ENCODE measurements at regions of chr1 and their contacts with region 1.

Region 1: GRCh38 chr1:2194898-2195673 is 514 bp upstream of the FAAP20 start:
- DNase-seq: peak; percentile 93
- ATAC-seq: peak; percentile 75
- H3K4me3 ChIP-seq: peak overlapping the region; percentile 46 to 81 (median 63)
- H3K4me3 Mint-ChIP-seq: peak overlapping the region; percentile 93
- H3K27ac ChIP-seq: peak overlapping the region; percentile 80 to 84
- H3K27ac Mint-ChIP-seq: peak overlapping the region; percentile 96
- H3K4me1 ChIP-seq: peaks cover 26 to 41% of the 10 kb centered on the region in 2 donors
- H3K4me1 Mint-ChIP-seq: peaks cover 24% of the 10 kb centered on the region
- H3K27me3 ChIP-seq: no peaks in the 10 kb centered on the region
- H3K27me3 Mint-ChIP-seq: no peaks in the 10 kb centered on the region
- CTCF ChIP-seq: peak; percentile 90

Region 2: DNA sequence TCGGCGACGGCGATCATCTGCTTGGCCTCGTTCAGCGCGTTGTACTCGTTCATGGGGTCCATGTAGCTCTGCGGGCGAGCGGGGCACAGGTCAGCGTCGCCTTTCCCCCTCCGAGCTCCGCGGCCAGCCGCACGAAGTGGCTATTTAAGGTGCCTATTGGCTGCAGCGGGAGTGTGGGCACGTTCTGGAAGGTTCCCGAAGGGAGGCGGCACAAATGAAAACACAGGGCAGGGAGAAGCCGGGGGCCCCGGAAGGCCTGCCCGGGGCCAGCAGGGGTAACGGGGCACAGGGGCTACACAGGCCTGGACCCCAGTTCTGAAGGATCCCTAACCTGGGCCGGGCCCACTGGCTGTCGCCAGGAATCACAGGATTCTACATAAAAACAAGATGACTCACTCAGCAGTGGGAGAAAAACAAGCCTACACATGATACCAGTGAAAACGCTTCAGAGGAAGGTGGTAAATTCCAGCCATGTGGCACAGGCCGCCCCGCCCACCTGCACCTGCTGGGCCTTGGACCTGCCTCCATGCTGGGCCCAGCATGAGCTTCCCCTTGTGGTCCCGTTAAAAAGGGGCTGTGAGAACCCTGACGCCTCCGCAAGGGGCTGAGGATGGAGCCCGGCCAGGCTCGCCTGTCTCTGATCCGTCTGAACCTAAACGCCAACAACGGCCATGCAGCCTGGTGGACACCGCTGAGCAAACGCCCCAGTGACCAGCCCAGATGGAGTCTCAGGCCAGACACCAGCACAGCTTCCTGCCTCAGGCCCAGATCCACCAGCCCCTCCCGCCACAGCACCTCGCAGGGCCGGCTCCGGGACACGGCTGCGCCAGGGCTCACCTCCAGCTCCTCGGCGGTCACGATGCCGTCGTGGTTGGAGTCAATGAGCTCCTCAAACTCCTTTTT is 977.2 kb before region 1 on chr1:
- CTCF ChIA-PET with region 1: no interaction called
- POLR2A ChIA-PET with region 1: no interaction called
- intact Hi-C with region 1: no loop called
- DNase-seq: no peak
- ATAC-seq: no peak
- H3K4me3 ChIP-seq: no peak overlapping the region
- H3K4me3 Mint-ChIP-seq: no peak overlapping the region
- H3K27ac ChIP-seq: no peak overlapping the region
- H3K27ac Mint-ChIP-seq: no peak overlapping the region
- H3K4me1 ChIP-seq: peaks cover 26 to 27% of the 10 kb centered on the region in 2 donors
- H3K4me1 Mint-ChIP-seq: peaks cover 22% of the 10 kb centered on the region
- H3K27me3 ChIP-seq: peaks cover 0 to 5% (median 3%) of the 10 kb centered on the region in 4 experiments
- H3K27me3 Mint-ChIP-seq: no peaks in the 10 kb centered on the region
- CTCF ChIP-seq: no peak

Region 3: DNA sequence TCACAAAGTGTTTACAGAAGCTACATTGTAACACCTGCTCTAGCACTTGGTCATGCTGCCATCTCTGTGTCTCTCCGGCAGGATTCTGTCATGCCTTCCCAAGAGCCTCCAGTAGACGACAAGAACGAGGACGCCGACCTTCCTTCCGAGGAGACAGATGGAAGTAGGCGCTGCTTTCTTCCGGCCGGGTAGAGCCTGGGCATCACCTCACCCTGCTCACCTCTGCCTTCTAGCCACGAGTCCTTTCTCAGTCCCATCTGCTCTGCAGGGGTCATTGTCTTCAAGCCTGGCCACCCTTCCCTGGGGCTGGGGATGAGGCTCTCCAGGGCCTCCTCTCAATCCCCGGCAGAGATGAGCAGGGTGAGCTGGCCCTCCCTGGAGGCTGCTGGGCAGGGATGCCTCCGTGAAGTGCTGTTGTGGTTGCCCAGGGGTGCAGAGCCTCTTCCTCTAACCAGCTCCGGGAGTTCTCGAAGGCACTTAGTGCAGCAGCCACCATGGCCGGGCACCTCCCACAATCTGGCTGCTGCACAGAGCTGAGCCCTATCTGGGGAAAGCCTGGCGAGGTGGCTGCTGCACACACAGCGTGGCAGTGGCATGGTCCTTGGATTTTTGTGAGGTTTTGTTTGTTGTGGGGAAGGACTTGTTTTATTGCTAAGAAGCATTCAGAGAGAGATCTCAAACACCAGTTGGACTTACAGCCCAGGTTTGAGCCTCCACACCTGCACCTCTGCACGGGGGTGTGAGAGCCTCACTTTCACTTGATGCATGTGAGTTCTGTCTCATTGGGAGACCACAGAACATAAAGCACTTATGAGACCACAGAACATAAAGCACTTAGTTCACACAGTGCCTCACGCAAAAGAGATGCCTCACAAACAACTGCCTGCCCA is 48.9 kb before region 1 on chr1:
- CTCF ChIA-PET with region 1: no interaction called
- POLR2A ChIA-PET with region 1: no interaction called
- intact Hi-C with region 1: no loop called
- DNase-seq: no peak
- ATAC-seq: no peak
- H3K4me3 ChIP-seq: no peak overlapping the region
- H3K4me3 Mint-ChIP-seq: no peak overlapping the region
- H3K27ac ChIP-seq: no peak overlapping the region
- H3K27ac Mint-ChIP-seq: no peak overlapping the region
- H3K4me1 ChIP-seq: peaks cover 8 to 11% of the 10 kb centered on the region in 2 donors
- H3K4me1 Mint-ChIP-seq: no peaks in the 10 kb centered on the region
- H3K27me3 ChIP-seq: no peaks in the 10 kb centered on the region
- H3K27me3 Mint-ChIP-seq: no peaks in the 10 kb centered on the region
- CTCF ChIP-seq: no peak

Region 4: GRCh38 chr1:2227346-2228153 is 32.5 kb after region 1 on chr1:
- CTCF ChIA-PET with region 1: interaction called, 17 read pairs
- POLR2A ChIA-PET with region 1: interaction called, 6 read pairs
- intact Hi-C with region 1: no loop called
- DNase-seq: peak; percentile 98
- ATAC-seq: peak; percentile 91
- H3K4me3 ChIP-seq: peak overlapping the region in 4 of 5 experiments; percentile 50 to 65 (median 60)
- H3K4me3 Mint-ChIP-seq: peak overlapping the region; percentile 80
- H3K27ac ChIP-seq: peak overlapping the region; percentile 57 to 83
- H3K27ac Mint-ChIP-seq: peak overlapping the region; percentile 83
- H3K4me1 ChIP-seq: peaks cover 35 to 43% of the 10 kb centered on the region in 2 donors
- H3K4me1 Mint-ChIP-seq: peaks cover 37% of the 10 kb centered on the region
- H3K27me3 ChIP-seq: no peaks in the 10 kb centered on the region
- H3K27me3 Mint-ChIP-seq: no peaks in the 10 kb centered on the region
- CTCF ChIP-seq: no peak

Region 5: GRCh38 chr1:2250688-2251281 is 55.7 kb after region 1 on chr1:
- CTCF ChIA-PET with region 1: no interaction called
- POLR2A ChIA-PET with region 1: no interaction called
- intact Hi-C with region 1: no loop called
- DNase-seq: no peak
- ATAC-seq: peak; percentile 15
- H3K4me3 ChIP-seq: no peak overlapping the region
- H3K4me3 Mint-ChIP-seq: peak overlapping the region; percentile 52
- H3K27ac ChIP-seq: peak overlapping the region in 1 of 2 donors; percentile 4
- H3K27ac Mint-ChIP-seq: peak overlapping the region; percentile 67
- H3K4me1 ChIP-seq: peaks cover 46 to 75% of the 10 kb centered on the region in 2 donors
- H3K4me1 Mint-ChIP-seq: peaks cover 64% of the 10 kb centered on the region
- H3K27me3 ChIP-seq: no peaks in the 10 kb centered on the region
- H3K27me3 Mint-ChIP-seq: no peaks in the 10 kb centered on the region
- CTCF ChIP-seq: no peak

Region 6: DNA sequence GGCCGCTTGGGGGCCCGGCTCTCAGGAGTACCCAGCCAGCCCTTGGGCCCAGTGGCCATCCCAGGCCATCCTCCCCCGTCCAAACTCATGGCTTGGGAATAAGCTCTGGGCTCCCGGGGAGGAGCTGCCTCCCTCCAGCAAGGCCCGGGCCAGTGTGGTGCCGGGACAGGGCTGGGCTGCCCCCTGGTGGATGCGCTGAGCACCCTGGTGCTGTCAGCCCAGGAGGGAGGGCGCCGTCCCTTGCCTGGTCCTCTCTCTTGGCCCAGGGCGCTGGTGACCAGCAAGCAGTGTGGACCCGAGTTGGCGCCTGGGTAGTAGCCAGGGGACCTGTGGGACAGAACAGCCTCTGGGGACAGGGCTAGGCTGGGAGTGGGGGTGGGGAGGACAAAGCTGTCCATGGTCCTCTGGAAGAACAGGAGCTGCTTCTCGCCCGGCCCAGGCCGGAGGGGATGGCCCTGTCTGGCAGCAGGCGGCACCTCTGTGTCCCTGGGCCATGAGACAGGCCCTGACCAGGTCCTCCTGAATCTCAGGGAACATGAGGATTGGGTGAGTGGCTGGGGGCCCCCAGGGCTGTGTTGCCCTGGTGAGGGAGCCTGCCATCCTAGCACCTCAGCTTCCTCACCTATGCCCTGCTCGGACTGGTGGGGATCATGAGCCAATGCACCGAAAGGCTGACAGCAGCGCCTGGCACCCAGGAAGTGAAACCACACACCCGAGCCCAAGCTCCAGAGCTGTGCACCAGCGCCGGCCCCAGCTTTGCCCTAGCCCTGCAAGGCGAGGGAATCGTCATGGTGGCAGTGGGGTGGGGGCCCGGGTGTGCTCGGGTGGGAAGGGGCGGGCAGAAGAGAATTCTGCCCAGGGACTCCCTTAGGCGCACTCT is 186.9 kb after region 1 on chr1:
- CTCF ChIA-PET with region 1: interaction called, 295 read pairs
- POLR2A ChIA-PET with region 1: interaction called, 24 read pairs
- intact Hi-C with region 1: no loop called
- DNase-seq: peak; percentile 81
- ATAC-seq: peak; percentile 84
- H3K4me3 ChIP-seq: no peak overlapping the region
- H3K4me3 Mint-ChIP-seq: no peak overlapping the region
- H3K27ac ChIP-seq: no peak overlapping the region
- H3K27ac Mint-ChIP-seq: peak overlapping the region; percentile 56
- H3K4me1 ChIP-seq: peaks cover 29 to 46% of the 10 kb centered on the region in 2 donors
- H3K4me1 Mint-ChIP-seq: peaks cover 23% of the 10 kb centered on the region
- H3K27me3 ChIP-seq: no peaks in the 10 kb centered on the region
- H3K27me3 Mint-ChIP-seq: no peaks in the 10 kb centered on the region
- CTCF ChIP-seq: peak; percentile 87

Region 7: GRCh38 chr1:2525920-2526823 is 331.1 kb after region 1 on chr1 and contains the start of gene PANK4:
- CTCF ChIA-PET with region 1: interaction called, 5 read pairs
- POLR2A ChIA-PET with region 1: interaction called, 3 read pairs
- intact Hi-C with region 1: loop called (anchors 1 kb)
- DNase-seq: peak; percentile 94
- ATAC-seq: peak; percentile 91
- H3K4me3 ChIP-seq: peak within 1 kb of the TSS; percentile 48 to 96 (median 74)
- H3K4me3 Mint-ChIP-seq: peak within 1 kb of the TSS; percentile 96
- H3K27ac ChIP-seq: peak within 1 kb of the TSS; percentile 41 to 78
- H3K27ac Mint-ChIP-seq: peak within 1 kb of the TSS; percentile 85
- H3K4me1 ChIP-seq: peaks cover 41 to 53% of the 10 kb centered on the region in 2 donors
- H3K4me1 Mint-ChIP-seq: peaks cover 43% of the 10 kb centered on the region
- H3K27me3 ChIP-seq: peaks cover 0 to 24% (median 10%) of the 10 kb centered on the region in 4 experiments
- H3K27me3 Mint-ChIP-seq: no peaks in the 10 kb centered on the region
- CTCF ChIP-seq: no peak
- total RNA-seq, gene PANK4: 80.5 and 86.3 TPM in 2 replicates

Region 8: DNA sequence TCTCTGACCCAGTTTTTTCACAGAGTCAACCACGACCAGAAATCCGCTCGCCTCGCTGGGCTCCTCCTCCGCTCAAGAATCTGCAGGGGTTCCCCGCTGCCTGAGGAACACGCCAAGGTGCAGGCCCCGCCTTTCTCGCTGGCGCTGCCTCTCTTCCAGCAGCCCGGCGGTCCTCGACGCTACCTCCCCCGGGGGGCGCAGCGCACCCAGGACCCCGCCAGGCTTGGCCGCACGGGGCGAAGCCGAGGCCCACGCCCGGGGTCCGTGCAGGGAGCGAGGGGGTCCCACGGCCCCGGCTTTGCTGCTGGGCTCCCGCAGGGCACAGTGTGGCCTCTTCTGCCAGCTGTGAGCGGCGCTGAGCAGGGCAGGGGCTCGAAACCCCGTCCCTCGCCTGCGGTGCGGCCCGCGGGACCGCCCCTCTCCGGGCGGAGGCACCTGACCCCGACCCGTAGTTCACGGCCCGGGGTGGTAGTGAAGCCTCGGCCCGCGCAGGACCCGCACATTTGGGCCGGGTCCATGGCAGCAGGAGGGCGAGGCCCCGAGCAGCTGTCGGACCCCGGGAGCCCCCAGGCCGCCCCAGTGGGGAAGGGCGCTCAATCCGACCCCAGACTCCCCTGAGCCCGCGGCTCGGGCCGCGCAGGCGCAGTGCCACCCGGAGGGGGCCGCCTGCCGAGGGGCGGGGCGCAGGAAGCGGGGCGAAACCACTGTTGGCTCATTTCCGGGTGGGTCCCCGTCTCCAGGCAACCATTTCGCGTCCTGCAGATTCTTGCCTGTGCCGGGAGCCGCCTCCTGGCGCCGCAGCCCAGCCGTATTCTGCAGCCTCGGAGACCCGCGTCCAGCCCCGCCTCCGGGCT is 447.7 kb after region 1 on chr1:
- CTCF ChIA-PET with region 1: no interaction called
- POLR2A ChIA-PET with region 1: no interaction called
- intact Hi-C with region 1: loop called (anchors 10 kb)
- DNase-seq: peak; percentile 95
- ATAC-seq: peak; percentile 77
- H3K4me3 ChIP-seq: peak overlapping the region; percentile 38 to 91 (median 83)
- H3K4me3 Mint-ChIP-seq: peak overlapping the region; percentile 91
- H3K27ac ChIP-seq: peak overlapping the region; percentile 81 to 97
- H3K27ac Mint-ChIP-seq: peak overlapping the region; percentile 86
- H3K4me1 ChIP-seq: peaks cover 13 to 17% of the 10 kb centered on the region in 2 donors
- H3K4me1 Mint-ChIP-seq: peaks cover 12% of the 10 kb centered on the region
- H3K27me3 ChIP-seq: no peaks in the 10 kb centered on the region
- H3K27me3 Mint-ChIP-seq: no peaks in the 10 kb centered on the region
- CTCF ChIP-seq: no peak